Endothelial cell of umbilical vein (primary cell): ENCODE measurements at regions of chr6 and their contacts with region 1.

Region 1: DNA sequence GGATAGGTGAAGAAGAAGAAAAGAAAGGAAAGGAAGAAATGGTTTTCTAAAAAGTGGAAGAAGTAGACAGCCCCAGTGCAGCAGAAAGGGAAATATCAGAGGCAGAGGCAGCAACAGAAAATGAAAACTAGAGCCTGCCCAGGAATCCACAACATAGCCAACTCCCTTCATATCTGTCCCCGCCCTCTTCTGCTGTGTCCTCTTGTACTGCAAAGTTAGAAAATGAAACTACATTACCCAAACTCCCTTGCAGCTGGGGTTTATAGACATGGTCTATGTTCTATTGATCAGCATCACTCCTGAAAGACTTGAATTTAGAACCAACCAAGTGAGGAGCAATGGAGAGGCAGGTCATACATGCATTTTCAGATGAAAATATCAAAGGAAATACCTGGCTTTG is 200.5 kb upstream of the PHACTR1 start:
- DNase-seq: no peak
- H3K4me3 ChIP-seq: no peak overlapping the region
- H3K27ac ChIP-seq: no peak overlapping the region
- H3K4me1 ChIP-seq: no peaks in the 10 kb centered on the region
- H3K27me3 ChIP-seq: no peaks in the 10 kb centered on the region
- CTCF ChIP-seq: no peak
- POLR2A ChIP-seq: no peak

Region 2: DNA sequence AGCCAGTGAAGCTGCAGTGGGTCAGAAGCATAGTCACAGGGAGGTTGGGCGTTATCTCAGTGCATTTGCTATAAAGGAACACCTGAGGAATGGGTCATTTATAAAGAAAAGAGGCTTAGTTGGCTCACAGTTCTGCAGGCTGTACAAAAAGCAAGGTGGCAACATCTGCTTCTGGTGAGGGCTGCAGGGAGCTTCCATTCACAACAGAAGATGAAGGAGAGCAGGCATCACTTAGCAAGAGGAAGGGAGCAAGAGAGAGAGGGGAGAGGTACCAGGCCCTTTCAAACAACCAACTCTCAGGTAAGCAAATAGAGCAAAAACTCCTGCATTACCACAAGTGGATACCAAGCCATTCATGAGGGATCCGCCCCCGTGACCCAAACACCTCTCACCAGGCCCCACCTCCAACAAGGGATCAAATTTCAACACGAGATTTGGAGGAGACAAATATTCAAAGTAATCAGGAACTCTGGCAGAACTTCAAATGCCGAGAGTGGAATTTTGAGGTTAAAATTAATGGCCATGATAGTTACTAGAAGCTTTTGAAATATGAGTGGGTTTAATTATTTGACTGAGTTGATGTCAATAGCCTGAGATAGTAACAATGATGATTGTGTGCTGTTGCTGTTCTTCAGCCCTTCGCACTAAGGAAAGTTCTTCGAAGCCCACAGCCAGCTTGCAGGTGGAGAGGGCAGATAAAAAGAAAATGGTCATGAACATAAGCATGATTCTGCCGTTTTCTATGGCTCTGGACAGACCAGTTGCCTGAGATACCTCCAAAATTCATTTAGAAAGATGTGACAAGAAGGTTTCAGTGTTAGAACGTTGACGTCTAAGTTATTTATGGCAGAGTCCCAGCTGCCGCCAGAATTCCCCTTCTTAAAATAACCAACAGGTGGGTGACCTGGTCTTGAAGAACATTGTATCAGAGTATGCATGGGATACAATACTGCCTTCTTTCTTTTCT is 682.2 kb before region 1 on chr6:
- CTCF ChIA-PET with region 1: no interaction called
- POLR2A ChIA-PET with region 1: no interaction called
- dilution Hi-C with region 1: no loop called
- intact Hi-C with region 1: no loop called
- DNase-seq: no peak
- H3K4me3 ChIP-seq: no peak overlapping the region
- H3K27ac ChIP-seq: no peak overlapping the region
- H3K4me1 ChIP-seq: no peaks in the 10 kb centered on the region
- H3K27me3 ChIP-seq: peaks cover 2 to 8% of the 10 kb centered on the region in 2 experiments
- CTCF ChIP-seq: no peak
- POLR2A ChIP-seq: no peak

Region 3: GRCh38 chr6:12504319-12504966 is 11.6 kb before region 1 on chr6:
- CTCF ChIA-PET with region 1: interaction called, 12 read pairs
- POLR2A ChIA-PET with region 1: no interaction called
- dilution Hi-C with region 1: no loop called
- intact Hi-C with region 1: no loop called
- DNase-seq: no peak
- H3K4me3 ChIP-seq: no peak overlapping the region
- H3K27ac ChIP-seq: no peak overlapping the region
- H3K4me1 ChIP-seq: no peaks in the 10 kb centered on the region
- H3K27me3 ChIP-seq: no peaks in the 10 kb centered on the region
- CTCF ChIP-seq: peak; percentile 25 to 46
- POLR2A ChIP-seq: no peak

Region 4: GRCh38 chr6:12572896-12573827 is 57.1 kb after region 1 on chr6:
- CTCF ChIA-PET with region 1: no interaction called
- POLR2A ChIA-PET with region 1: no interaction called
- dilution Hi-C with region 1: no loop called
- intact Hi-C with region 1: no loop called
- DNase-seq: peak; percentile 92
- H3K4me3 ChIP-seq: peak overlapping the region in 1 of 3 experiments; percentile 13
- H3K27ac ChIP-seq: peak overlapping the region; percentile 92
- H3K4me1 ChIP-seq: peaks cover 75% of the 10 kb centered on the region
- H3K27me3 ChIP-seq: no peaks in the 10 kb centered on the region
- CTCF ChIP-seq: no peak
- POLR2A ChIP-seq: no peak